KBM-7 (cell line): ENCODE measurements at regions of chr6 and their contacts with region 1.

Region 1: DNA sequence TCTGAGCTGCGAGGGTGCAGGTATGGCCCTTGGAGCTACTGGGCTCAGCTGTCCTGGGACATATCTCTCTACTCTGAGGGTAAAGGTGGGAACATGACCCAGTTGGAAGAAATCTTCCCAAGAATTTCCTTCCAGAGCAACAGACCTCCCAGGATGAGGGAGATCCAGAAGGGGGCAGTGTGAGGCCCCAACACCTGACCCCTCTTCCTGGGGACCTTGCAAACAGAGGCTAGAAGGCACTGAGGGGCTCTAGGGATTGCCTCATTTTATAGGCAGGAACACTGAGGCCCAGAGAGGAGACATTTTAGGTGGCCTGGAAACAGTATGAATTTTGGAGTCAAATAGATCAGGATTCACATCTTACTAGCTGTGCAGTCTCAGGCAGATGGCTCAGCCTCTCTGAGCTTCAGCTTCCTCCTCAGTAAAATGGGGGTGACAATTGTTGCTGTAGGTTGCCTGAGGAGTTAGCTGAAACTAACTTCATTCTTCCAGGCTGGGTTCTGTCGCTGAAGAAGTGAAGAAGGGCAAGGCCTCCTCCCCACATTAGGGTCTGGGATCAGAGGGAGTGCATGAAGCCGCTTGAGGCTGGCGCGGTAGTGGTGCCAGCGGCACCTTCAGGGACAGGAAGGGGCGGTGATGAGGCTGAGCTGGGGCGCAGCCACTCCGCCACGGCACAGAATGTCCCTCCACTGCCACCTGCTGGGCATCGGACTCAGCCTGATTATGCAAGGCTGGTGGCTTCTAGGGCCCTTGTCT is 11.4 kb downstream of the KCNK17 start:
- DNase-seq: peak; percentile 88

Region 2: GRCh38 chr6:38997128-38997761 is 305.6 kb before region 1 on chr6:
- in situ Hi-C with region 1: loop called (anchors 25 kb)
- DNase-seq: peak; percentile 34

Region 3: DNA sequence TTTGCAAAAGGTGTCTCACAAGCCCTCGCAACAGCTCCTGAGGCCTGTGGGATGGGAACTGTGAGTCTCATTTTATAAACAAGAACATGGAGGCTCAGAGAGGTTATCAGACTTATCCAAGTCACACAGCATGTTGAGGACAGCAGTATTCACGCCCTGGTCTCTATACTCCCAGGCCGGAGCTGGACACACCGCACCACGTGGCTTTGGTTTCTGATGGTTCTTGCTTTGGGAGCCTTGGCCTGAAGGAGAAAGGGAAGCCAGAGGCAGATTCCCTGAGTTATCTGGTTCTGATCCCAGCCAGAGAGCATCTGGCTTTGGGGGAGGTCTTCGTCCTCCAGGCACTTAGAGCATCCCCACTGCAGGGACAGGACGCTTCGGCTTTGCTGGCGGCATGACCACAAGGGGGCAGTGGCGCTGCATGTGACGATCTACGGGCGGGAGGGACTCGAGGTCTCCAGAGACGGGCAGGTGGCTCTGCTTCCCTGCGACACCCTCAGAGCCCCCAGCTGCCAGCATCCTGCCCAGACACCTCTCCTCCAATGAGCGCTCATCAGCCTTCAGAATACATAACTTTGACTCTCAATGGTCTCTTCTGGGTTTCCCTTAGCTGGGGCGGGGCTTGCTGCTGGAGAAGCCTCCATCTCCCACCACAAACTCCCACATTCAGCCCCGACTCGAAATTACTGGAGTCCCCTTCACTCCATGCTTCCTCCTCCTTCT is 136.5 kb before region 1 on chr6:
- in situ Hi-C with region 1: loop called (anchors 5 kb)
- DNase-seq: peak; percentile 84